ENCODE measurements at regions of chr4 and their contacts with region 1.

Region 1: DNA sequence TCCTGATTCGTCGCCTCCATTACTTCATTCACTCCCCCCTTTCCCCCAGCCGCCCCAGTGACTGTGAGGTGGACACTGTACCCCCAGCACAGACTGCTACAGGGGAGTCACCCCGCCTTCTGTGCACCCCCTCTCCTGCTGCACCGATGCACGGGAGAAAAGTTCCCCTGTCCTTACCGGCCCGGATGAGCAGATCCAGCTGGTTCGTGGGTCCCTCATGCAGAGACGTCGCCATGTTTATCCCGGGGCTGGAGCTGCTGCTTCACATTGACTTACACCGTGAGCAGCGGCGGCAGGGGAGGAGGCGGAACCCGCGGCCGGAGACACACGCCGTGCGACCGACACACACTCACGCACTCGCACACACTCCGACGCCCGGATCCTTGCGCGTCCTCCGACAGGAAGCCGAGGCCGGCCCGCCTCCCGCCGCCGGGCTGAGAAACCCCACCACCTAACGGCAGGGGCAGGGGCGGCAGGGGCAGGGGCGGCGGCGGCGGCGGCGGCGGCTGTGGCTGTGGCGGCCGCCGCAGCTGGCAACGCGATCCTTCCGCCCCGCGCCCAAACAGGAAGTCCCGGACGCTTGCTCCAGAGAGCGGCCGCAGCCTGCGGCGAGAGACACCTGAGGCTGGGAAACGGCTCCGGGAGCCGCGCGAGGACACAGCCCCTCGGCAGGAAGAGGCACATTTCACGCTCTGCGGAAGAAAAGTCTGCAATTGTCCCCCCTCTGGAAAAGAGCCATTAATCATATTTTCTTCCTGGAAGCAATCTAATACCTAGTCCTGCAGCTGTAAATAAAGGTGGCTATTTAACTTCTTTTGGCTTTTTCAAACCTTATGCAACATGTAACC is 68.6 kb downstream of the NOCT start:
- DNase-seq: peak; percentile 89 to 95 (median 92)
- ATAC-seq: peak; percentile 57 to 89 (median 78)
- H3K4me3 ChIP-seq: peak overlapping the region; percentile 72 to 94 (median 82)
- H3K27ac ChIP-seq: peak overlapping the region; percentile 80 to 97 (median 94)
- H3K4me1 ChIP-seq: peaks cover 0 to 38% (median 29%) of the 10 kb centered on the region in 12 donors
- H3K27me3 ChIP-seq: no peaks in the 10 kb centered on the region
- CTCF ChIP-seq: peak in 10 of 12 donors; percentile 15 to 54 (median 39)
- POLR2A ChIP-seq: peak in 1 of 2 donors; percentile 30

Region 2: DNA sequence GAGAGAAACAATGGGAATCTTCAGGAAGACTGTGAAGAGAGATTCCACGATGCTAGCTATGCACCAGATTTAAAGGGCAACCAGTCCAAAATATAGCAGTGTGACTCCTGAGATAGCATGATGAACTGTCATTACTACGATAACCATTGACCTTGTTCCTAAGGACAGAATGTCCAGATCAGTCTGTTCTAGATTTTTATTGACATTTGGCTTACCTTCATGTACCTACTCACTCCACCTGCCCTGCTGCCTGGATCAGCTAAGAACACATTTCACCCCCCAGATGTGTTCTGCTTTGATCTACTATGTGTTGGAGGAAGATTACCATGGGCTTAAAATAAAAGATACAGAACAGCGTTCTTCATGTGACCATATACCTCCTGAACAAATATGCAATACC is 42.7 kb after region 1 on chr4:
- intact Hi-C with region 1: no loop called
- DNase-seq: no peak
- ATAC-seq: no peak
- H3K4me3 ChIP-seq: no peak overlapping the region
- H3K27ac ChIP-seq: no peak overlapping the region
- H3K4me1 ChIP-seq: peaks cover 0 to 11% (median 0%) of the 10 kb centered on the region in 12 donors
- H3K27me3 ChIP-seq: no peaks in the 10 kb centered on the region
- CTCF ChIP-seq: no peak
- POLR2A ChIP-seq: no peak

Region 3: GRCh38 chr4:139301113-139301820 is 217.1 kb after region 1 on chr4 and contains the start of gene NAA15:
- intact Hi-C with region 1: loop called in 4 of 10 experiments (anchors 2 to 5 kb)
- DNase-seq: peak; percentile 98 to 99 (median 98)
- ATAC-seq: peak; percentile 96 to 98 (median 97)
- H3K4me3 ChIP-seq: peak within 1 kb of the TSS; percentile 77 to 97 (median 93)
- H3K27ac ChIP-seq: peak within 1 kb of the TSS; percentile 81 to 97 (median 92)
- H3K4me1 ChIP-seq: peaks cover 2 to 53% (median 25%) of the 10 kb centered on the region in 12 donors
- H3K27me3 ChIP-seq: no peaks in the 10 kb centered on the region
- CTCF ChIP-seq: peak in 1 of 12 donors; percentile 8
- POLR2A ChIP-seq: peak in 1 of 2 donors; percentile 77
- total RNA-seq, gene NAA15: 18.6 to 50.8 (median 33.0) TPM

Measured in heart left ventricle (tissue), 16 donors.